ENCODE measurements at regions of chr14 and their contacts with region 1.

Region 1: DNA sequence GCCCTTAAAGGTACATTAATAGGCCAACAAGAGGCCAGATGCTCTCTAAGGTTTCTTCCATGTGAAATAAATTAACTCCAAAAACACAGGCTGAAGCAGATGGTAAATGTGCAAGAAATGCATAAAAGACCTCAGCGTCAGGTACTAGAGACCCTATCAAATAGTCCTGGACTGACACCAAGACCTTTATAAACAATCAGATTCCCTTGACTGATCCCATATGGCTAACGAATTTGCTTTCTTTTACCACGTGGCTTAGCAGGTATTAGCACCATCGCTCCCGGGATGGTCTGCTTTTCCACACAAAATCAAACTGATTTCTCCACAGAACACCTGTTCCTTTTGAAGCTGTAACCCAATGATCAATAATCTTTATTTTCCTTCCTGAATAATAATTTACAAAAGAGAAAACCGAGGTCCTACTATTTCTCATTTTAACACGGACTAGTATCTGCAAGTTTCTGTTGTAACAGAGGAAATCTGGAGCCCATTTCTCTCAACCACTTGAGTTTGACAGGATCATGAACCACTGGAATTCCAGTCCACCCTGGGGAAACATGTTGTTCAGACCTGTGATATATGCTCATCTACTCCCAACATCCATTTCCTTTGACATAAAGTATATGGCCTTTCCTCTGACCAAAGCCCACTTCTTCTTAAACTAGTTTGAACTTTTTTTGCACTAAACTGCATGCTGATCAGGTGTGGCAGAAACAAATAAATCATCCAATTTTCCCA is 48.2 kb upstream of the DAAM1 start:
- DNase-seq: no peak
- ATAC-seq: no peak

Region 2: GRCh38 chr14:57883061-57883460 is 1257.2 kb before region 1 on chr14:
- intact Hi-C with region 1: no loop called
- DNase-seq: no peak
- ATAC-seq: no peak

Region 3: GRCh38 chr14:59182641-59183040 is 42.4 kb after region 1 on chr14:
- intact Hi-C with region 1: loop called (anchors 5 kb)
- DNase-seq: no peak
- ATAC-seq: no peak

Measured in Right ventricle myocardium inferior (tissue), 1 donor.